HCT116 (cell line): ENCODE measurements at regions of chr1 and their contacts with region 1.

Region 1: GRCh38 chr1:26469558-26470281 is 2.5 kb upstream of the HMGN2 start:
- DNase-seq: no peak
- ATAC-seq: no peak
- H3K4me3 ChIP-seq: no peak overlapping the region
- H3K27ac ChIP-seq: peak overlapping the region; percentile 7; the same call in 1 of the 2 replicates
- H3K4me1 ChIP-seq: peaks cover 13 to 39% of the 10 kb centered on the region in 2 experiments
- H3K27me3 ChIP-seq: no peaks in the 10 kb centered on the region
- CTCF ChIP-seq: no peak
- POLR2A ChIP-seq: no peak
- RAD21 ChIP-seq: no peak

Region 2: DNA sequence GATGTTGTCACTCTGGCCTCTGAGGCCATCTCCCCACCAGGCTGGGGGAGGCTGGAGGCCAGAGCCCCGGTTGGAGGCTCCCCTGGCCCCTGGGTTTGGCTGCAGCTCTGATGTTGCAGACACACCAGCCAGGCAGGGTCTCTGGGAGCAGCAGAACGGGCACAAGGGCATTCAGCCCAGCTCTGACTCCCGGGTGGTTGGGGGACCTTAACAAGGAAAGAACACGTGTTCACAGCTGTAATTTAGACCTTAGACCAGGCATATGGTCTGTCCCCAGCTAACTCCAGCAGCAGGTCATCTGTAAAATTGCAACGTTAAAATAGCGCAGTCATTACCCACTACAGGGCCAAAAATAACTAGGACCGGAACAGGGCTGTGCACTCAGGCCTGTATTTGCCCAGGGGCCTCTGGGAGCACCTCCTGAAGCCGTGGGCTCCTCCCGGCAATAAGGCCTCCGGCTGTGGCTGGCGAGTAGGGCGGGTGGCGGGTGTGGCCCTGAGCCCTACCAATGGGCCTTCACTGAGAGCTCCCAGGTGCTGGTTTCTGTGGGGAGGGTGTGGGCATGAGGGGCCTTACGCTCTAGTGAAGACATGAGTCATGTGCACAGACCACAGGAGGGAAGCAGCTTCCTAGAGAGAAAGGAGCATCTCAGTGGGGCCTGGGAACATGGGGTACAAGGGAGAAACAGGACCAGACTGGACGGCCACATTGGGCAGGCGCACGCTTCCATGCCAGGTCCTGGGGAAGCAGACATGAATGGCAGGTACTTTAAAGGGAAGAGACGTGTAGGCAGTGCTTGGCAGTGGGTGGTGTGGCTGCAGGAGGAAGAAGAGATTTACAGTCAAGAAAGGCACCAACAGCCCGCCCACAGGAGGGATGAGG is 920.2 kb before region 1 on chr1:
- CTCF ChIA-PET with region 1: no interaction called
- POLR2A ChIA-PET with region 1: no interaction called
- RAD21 ChIA-PET with region 1: no interaction called
- intact Hi-C with region 1: no loop called
- DNase-seq: peak; percentile 75
- ATAC-seq: peak; percentile 91
- H3K4me3 ChIP-seq: peak overlapping the region; percentile 10 to 34; a peak in 3 of 4 replicates
- H3K27ac ChIP-seq: peak overlapping the region; percentile 65
- H3K4me1 ChIP-seq: peaks cover 41 to 52% of the 10 kb centered on the region in 2 experiments
- H3K27me3 ChIP-seq: no peaks in the 10 kb centered on the region
- CTCF ChIP-seq: no peak
- POLR2A ChIP-seq: no peak
- RAD21 ChIP-seq: no peak

Region 3: GRCh38 chr1:26459573-26460031 is 10.1 kb before region 1 on chr1:
- CTCF ChIA-PET with region 1: interaction called, 12 read pairs
- POLR2A ChIA-PET with region 1: interaction called, 3 read pairs
- RAD21 ChIA-PET with region 1: no interaction called
- intact Hi-C with region 1: no loop called
- DNase-seq: no peak
- ATAC-seq: no peak
- H3K4me3 ChIP-seq: no peak overlapping the region
- H3K27ac ChIP-seq: no peak overlapping the region
- H3K4me1 ChIP-seq: no peaks in the 10 kb centered on the region
- H3K27me3 ChIP-seq: no peaks in the 10 kb centered on the region
- CTCF ChIP-seq: no peak
- POLR2A ChIP-seq: no peak
- RAD21 ChIP-seq: no peak